Naive thymus-derived CD4-positive, alpha-beta T cell (primary cell): ENCODE measurements at regions of chr7 and their contacts with region 1.

Region 1: DNA sequence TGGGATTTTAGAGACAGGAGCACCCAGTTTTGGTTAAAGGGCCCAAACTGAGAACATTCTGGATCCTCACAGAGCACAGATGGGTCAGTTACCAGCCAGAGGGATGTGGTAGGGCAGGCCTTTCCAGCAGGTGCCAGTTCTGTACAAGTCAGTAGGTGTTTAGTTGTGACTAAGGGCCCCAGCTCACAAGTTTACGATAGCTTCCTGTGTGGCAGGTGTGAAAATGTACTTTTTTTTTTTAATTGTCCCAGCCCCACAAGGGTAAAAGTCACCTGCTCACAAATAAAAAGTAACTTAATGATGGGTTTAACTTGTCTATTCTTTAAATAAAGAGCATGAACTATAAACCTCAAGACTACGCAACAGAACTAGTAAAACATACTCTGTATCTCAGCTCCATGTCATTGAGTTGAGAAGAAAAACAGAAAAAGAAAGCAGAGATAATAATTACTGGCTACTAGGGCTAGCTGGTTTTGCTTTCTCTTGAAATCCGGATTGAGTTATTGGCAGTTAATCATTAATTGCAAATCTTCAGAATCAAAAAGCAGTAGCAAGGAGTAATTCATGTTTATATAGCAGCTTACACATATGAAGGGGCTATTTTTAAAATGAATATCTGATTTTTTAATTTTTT is 15.4 kb downstream of the NFE2L3 start:
- DNase-seq: no peak
- ATAC-seq: peak; percentile 84
- H3K4me3 ChIP-seq: no peak overlapping the region
- H3K4me3 Mint-ChIP-seq: peak overlapping the region in 1 of 10 donors; percentile 14
- H3K27ac ChIP-seq: no peak overlapping the region
- H3K27ac Mint-ChIP-seq: peak overlapping the region in 6 of 9 donors; percentile 1 to 73 (median 30)
- H3K4me1 ChIP-seq: peaks cover 0 to 15% of the 10 kb centered on the region in 2 donors
- H3K4me1 Mint-ChIP-seq: peaks cover 9 to 56% (median 13%) of the 10 kb centered on the region in 7 donors
- H3K27me3 ChIP-seq: no peaks in the 10 kb centered on the region
- H3K27me3 Mint-ChIP-seq: no peaks in the 10 kb centered on the region

Region 2: DNA sequence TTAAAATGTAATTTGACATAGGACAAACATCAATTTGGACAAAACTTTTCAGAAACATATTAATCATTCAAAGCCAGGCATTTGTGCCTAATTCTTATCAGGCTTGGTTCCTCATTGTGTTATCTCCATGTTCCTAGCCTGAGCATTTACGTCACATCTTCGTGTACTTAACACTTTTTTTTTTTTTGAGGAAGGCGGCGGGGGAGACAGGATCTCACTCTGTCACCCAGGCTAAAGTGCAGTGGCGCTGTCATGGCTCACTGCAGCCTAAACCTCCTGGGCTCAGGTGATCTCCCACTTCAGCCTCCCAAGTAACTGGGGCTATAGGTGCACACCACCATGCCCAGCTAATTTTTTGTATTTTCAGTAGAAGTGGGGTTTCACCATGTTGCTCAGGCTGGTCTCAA is 13.4 kb after region 1 on chr7:
- CTCF ChIA-PET with region 1: interaction called, 4 read pairs
- POLR2A ChIA-PET with region 1: interaction called, 7 read pairs
- intact Hi-C with region 1: loop called in 1 of 2 experiments (anchors 2 kb)
- DNase-seq: no peak
- ATAC-seq: no peak
- H3K4me3 ChIP-seq: no peak overlapping the region
- H3K4me3 Mint-ChIP-seq: no peak overlapping the region
- H3K27ac ChIP-seq: peak overlapping the region; percentile 20
- H3K27ac Mint-ChIP-seq: peak overlapping the region in 6 of 9 donors; percentile 3 to 83 (median 77)
- H3K4me1 ChIP-seq: peaks cover 0 to 4% of the 10 kb centered on the region in 2 donors
- H3K4me1 Mint-ChIP-seq: peaks cover 22 to 69% (median 58%) of the 10 kb centered on the region in 7 donors
- H3K27me3 ChIP-seq: no peaks in the 10 kb centered on the region
- H3K27me3 Mint-ChIP-seq: no peaks in the 10 kb centered on the region

Region 3: DNA sequence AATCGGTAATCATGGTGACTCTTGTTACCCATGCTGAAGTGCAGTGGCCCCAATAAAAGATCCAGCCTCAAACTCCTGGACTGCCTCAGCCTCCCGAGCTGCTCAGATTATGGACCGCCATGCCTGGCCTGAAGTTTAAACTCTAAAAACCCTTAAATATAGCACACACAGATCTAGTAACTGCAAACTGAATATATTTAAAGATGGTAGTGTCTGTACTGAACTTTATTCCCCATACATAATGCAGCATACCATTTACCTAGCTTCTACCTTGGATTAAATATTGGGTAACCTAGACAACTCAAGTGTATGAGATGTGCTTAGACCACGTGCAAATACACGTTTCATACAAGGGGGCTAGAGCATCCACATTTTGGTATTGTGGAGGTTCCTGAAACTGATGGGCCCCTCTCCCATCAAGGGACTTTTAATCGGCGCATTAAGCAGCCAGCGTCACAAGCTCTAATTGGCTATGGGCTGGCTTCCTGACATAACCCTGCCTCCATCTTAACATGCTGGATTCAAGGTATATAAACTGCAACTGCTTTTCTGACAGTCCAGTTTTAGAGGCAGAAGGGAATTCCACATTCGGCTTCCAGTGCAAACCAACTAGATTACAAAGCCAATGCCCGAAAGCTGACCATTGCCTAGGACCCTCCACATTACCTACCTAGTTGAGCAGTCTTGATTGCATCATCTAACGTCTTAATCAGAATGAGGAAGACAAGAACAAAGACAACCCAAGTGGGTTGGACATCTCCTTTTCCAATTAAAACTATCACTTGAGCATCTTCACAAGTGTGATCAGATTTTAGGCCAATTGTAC is 20.2 kb after region 1 on chr7:
- CTCF ChIA-PET with region 1: interaction called, 8 read pairs
- POLR2A ChIA-PET with region 1: interaction called, 6 read pairs
- intact Hi-C with region 1: loop called (anchors 2 kb)
- DNase-seq: no peak
- ATAC-seq: peak; percentile 37
- H3K4me3 ChIP-seq: no peak overlapping the region
- H3K4me3 Mint-ChIP-seq: peak overlapping the region in 3 of 10 donors; percentile 16 to 49 (median 32)
- H3K27ac ChIP-seq: no peak overlapping the region
- H3K27ac Mint-ChIP-seq: peak overlapping the region in 7 of 9 donors; percentile 25 to 89 (median 71)
- H3K4me1 ChIP-seq: peaks cover 13 to 20% of the 10 kb centered on the region in 2 donors
- H3K4me1 Mint-ChIP-seq: peaks cover 47 to 90% (median 79%) of the 10 kb centered on the region in 7 donors
- H3K27me3 ChIP-seq: no peaks in the 10 kb centered on the region
- H3K27me3 Mint-ChIP-seq: no peaks in the 10 kb centered on the region

Region 4: GRCh38 chr7:27933671-27934565 is 1766.5 kb after region 1 on chr7:
- CTCF ChIA-PET with region 1: no interaction called
- POLR2A ChIA-PET with region 1: no interaction called
- intact Hi-C with region 1: no loop called
- DNase-seq: no peak
- ATAC-seq: no peak
- H3K4me3 ChIP-seq: no peak overlapping the region
- H3K4me3 Mint-ChIP-seq: no peak overlapping the region
- H3K27ac ChIP-seq: no peak overlapping the region
- H3K27ac Mint-ChIP-seq: no peak overlapping the region
- H3K4me1 ChIP-seq: no peaks in the 10 kb centered on the region
- H3K4me1 Mint-ChIP-seq: peaks cover 0 to 2% (median 0%) of the 10 kb centered on the region in 7 donors
- H3K27me3 ChIP-seq: no peaks in the 10 kb centered on the region
- H3K27me3 Mint-ChIP-seq: peaks cover 0 to 3% (median 0%) of the 10 kb centered on the region in 5 donors